BJ (cell line): ENCODE measurements at regions of chr18 and their contacts with region 1.

Region 1: GRCh38 chr18:70331456-70332097 is 42.7 kb downstream of the SOCS6 start:
- DNase-seq: no peak
- H3K4me3 ChIP-seq: no peak overlapping the region
- H3K27me3 ChIP-seq: no peaks in the 10 kb centered on the region
- CTCF ChIP-seq: no peak

Region 2: DNA sequence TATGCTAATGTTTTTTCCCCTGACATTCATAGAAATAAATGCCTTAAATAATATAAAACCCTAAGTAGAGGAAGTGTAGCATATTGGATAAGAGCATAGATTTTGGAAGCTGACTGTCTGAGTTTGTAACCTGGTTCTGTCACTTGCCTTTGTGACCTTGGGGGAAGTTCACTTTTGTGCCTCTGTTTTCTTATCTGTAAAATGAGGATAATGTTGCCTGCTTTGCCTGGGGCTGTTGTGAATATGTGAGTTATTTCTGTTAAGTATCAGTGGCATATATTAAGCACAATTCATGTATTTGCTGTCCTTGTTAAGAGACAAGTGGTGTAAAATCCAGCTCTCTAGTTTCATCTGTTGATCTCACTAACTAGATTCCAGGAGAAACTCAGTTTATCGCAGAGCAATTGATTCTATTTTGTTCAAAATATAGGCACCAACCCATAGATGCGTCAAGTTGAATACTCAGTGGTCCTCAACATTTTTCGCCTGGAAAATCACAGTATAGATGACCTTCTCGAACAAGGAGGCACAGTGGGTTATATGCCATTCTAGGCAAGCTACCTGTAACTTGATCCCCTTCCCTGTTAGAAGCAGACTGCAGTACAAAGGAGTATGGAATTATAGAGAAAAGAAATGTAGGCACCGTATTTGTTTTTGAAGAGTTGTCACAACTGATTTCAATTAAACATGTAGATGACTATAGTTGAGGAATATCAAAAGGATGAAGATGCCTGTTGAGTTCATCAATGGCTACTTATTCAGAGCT is 24.2 kb after region 1 on chr18:
- CTCF ChIA-PET with region 1: no interaction called
- POLR2A ChIA-PET with region 1: interaction called, 10 read pairs
- DNase-seq: no peak
- H3K4me3 ChIP-seq: no peak overlapping the region
- H3K27me3 ChIP-seq: no peaks in the 10 kb centered on the region
- CTCF ChIP-seq: no peak